ENCODE measurements at regions of chr6 and their contacts with region 1.

Region 1: DNA sequence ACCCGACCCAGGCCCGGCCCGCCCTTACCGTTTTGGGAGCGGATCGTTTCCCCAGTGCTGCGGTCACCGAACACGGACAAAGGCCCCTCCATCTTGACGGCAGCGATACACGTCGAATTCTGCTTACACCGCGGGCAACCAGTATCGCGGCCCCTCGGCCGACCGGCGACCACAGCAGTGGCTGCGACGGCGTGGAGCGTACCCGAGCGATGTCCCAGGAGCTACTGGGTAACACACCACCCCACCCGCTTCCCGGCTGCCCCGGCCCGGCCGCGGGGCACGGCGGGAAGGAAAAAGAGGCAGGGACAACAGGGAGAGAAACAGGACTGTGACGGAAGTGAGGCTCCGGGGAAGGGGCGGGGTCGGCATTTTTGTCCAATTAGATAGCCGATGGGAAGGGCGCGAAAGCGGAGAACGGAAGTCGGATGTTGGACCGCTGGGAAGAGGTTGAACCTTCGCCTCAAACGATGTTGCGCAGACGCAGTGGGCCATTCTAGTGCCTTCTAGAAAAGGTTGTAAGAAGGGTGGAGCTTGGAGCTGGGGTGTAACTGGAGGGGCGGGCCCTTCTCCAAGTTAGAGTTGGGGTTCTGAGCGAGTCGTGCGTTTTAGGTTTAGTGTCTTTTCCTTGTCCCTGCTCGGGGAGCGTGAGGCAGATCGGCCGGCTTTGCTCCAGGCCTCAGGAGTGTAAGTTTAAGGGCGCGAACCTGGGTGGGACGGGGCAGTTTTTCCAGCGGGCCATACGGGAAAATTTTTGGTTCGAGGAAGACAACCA is at the start of gene TCP1:
- DNase-seq: peak; percentile 100
- H3K4me3 Mint-ChIP-seq: peak within 1 kb of the TSS; percentile 99
- H3K27ac Mint-ChIP-seq: peak within 1 kb of the TSS; percentile 98
- H3K4me1 Mint-ChIP-seq: peaks cover 28% of the 10 kb centered on the region
- H3K27me3 Mint-ChIP-seq: no peaks in the 10 kb centered on the region
- CTCF ChIP-seq: no peak
- total RNA-seq, gene TCP1: 341 and 351 TPM in 2 replicates

Region 2: GRCh38 chr6:159693128-159693893 is 96.3 kb before region 1 on chr6 and contains the start of gene SOD2:
- CTCF ChIA-PET with region 1: interaction called, 9 read pairs
- POLR2A ChIA-PET with region 1: interaction called, 167 read pairs
- intact Hi-C with region 1: loop called (anchors 1 kb)
- DNase-seq: peak; percentile 91
- H3K4me3 Mint-ChIP-seq: peak within 1 kb of the TSS; percentile 77
- H3K27ac Mint-ChIP-seq: peak within 1 kb of the TSS; percentile 97
- H3K4me1 Mint-ChIP-seq: peaks cover 34% of the 10 kb centered on the region
- H3K27me3 Mint-ChIP-seq: no peaks in the 10 kb centered on the region
- CTCF ChIP-seq: no peak
- total RNA-seq, gene SOD2: 424 and 600 TPM in 2 replicates

Region 3: GRCh38 chr6:159720708-159721107 is 68.9 kb before region 1 on chr6:
- CTCF ChIA-PET with region 1: interaction called, 4 read pairs
- POLR2A ChIA-PET with region 1: interaction called, 198 read pairs
- intact Hi-C with region 1: no loop called
- DNase-seq: peak; percentile 72
- H3K4me3 Mint-ChIP-seq: no peak overlapping the region
- H3K27ac Mint-ChIP-seq: no peak overlapping the region
- H3K4me1 Mint-ChIP-seq: peaks cover 42% of the 10 kb centered on the region
- H3K27me3 Mint-ChIP-seq: no peaks in the 10 kb centered on the region
- CTCF ChIP-seq: peak; percentile 40

Region 4: GRCh38 chr6:159761873-159762680 is 27.5 kb before region 1 on chr6 and contains the start of gene ACAT2:
- CTCF ChIA-PET with region 1: interaction called, 3 read pairs
- POLR2A ChIA-PET with region 1: interaction called, 44 read pairs
- intact Hi-C with region 1: no loop called
- DNase-seq: peak; percentile 96
- H3K4me3 Mint-ChIP-seq: peak within 1 kb of the TSS; percentile 88
- H3K27ac Mint-ChIP-seq: peak within 1 kb of the TSS; percentile 82
- H3K4me1 Mint-ChIP-seq: peaks cover 28% of the 10 kb centered on the region
- H3K27me3 Mint-ChIP-seq: no peaks in the 10 kb centered on the region
- CTCF ChIP-seq: no peak
- total RNA-seq, gene ACAT2: 13.4 and 46.0 TPM in 2 replicates

Region 5: GRCh38 chr6:159806021-159806458 is 16.5 kb after region 1 on chr6:
- CTCF ChIA-PET with region 1: interaction called, 6 read pairs
- POLR2A ChIA-PET with region 1: interaction called, 82 read pairs
- intact Hi-C with region 1: loop called (anchors 2 kb)
- DNase-seq: peak; percentile 86
- H3K4me3 Mint-ChIP-seq: no peak overlapping the region
- H3K27ac Mint-ChIP-seq: peak overlapping the region; percentile 49
- H3K4me1 Mint-ChIP-seq: peaks cover 16% of the 10 kb centered on the region
- H3K27me3 Mint-ChIP-seq: no peaks in the 10 kb centered on the region
- CTCF ChIP-seq: no peak

Region 6: GRCh38 chr6:159826968-159827647 is 37.5 kb after region 1 on chr6:
- CTCF ChIA-PET with region 1: no interaction called
- POLR2A ChIA-PET with region 1: no interaction called
- intact Hi-C with region 1: no loop called
- DNase-seq: no peak
- H3K4me3 Mint-ChIP-seq: no peak overlapping the region
- H3K27ac Mint-ChIP-seq: no peak overlapping the region
- H3K4me1 Mint-ChIP-seq: no peaks in the 10 kb centered on the region
- H3K27me3 Mint-ChIP-seq: peaks cover 18% of the 10 kb centered on the region
- CTCF ChIP-seq: no peak

Region 7: DNA sequence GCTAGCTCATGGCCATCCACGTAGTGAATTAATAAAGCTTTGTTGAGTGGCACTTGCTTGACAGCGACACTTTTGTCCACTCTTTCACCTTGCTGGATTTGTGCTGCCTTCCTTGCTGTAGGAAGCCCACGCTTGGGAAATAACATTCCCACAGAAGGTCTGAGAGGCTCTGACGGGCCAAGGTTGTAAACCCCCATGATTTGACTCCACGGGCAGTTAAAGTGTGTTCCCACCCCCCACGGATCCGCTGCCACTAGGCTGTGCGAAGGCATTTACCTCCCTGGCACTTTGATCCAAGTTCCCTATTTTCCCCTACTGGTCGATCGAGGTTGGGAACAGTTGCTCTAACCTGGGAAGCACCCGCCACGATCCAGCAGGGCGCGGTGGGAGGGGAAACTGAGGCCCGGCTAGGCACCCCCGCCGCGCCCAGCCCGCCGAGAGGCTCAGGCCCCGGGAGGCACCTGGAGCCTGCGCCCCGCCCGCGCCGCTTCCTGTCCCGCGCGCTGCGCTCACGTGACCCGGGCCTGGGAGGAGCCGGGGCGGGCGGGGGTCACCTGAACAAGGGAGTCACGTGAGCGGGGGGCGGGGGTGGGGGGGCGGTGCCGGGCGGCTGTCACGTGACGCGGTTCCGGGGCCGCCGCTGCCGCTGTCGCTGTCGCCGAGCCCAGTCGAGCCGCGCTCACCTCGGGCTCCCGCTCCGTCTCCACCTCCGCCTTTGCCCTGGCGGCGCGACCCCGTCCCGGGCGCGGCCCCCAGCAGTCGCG is 179.1 kb after region 1 on chr6 and contains the start of gene IGF2R:
- CTCF ChIA-PET with region 1: no interaction called
- POLR2A ChIA-PET with region 1: interaction called, 12 read pairs
- intact Hi-C with region 1: no loop called
- DNase-seq: peak; percentile 92
- H3K4me3 Mint-ChIP-seq: peak within 1 kb of the TSS; percentile 79
- H3K27ac Mint-ChIP-seq: peak within 1 kb of the TSS; percentile 67
- H3K4me1 Mint-ChIP-seq: peaks cover 34% of the 10 kb centered on the region
- H3K27me3 Mint-ChIP-seq: no peaks in the 10 kb centered on the region
- CTCF ChIP-seq: peak; percentile 13
- total RNA-seq, gene IGF2R: 160 and 234 TPM in 2 replicates